ENCODE measurements at regions of chr20 and their contacts with region 1.

Region 1: GRCh38 chr20:50189681-50190582 is 698 bp upstream of the CEBPB start:
- DNase-seq: peak; percentile 70 to 95
- H3K4me3 ChIP-seq: peak overlapping the region; percentile 88; the same call in 1 of the 2 replicates
- H3K27ac ChIP-seq: peak overlapping the region; percentile 99
- H3K4me1 ChIP-seq: peaks cover 44% of the 10 kb centered on the region
- H3K27me3 ChIP-seq: no peaks in the 10 kb centered on the region
- CTCF ChIP-seq: peak; percentile 86

Region 2: DNA sequence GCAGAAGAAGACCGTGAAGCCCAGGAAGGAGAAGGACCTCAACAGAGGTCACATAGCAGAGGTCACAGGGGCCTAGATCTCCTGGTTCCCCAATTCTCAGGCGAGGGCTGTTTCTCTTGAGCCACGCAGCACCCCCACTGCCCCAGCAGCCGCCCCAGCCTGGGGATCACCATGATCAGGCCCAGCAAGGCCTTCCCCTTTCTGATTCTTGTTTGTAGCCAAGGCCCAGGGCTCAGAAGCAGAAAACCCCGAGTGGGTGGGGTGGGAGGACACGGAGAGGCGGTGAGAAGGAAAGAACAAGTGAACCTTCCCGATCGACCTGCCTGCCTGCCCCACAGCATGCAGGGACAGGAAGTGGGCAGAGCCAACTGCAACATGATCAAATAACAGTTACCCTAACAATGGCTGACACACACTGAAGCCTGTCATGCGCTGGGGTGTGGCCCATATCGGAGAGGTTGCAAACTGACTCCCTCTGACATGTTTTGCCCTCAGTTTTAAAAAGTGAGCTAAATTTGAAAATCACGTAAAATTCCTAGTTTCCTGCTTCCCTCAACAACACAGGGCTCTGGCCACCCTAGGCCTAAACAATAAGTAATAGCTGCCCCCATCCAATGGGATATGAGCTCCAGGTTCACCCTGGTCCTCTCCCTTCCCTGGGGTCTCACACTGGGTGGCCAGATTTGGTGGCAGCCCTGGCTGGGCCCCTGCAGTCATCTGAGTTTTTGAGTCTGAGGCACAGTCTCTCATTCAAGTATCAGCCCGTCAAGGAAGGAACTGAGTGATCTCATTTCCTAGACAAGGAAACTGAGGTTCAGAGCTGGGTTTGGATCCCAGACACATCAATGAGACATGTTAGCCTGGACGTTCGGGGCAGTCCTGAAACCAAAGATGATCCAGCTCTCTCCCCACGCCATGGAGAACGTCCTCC is 42.9 kb before region 1 on chr20:
- CTCF ChIA-PET with region 1: no interaction called
- POLR2A ChIA-PET with region 1: no interaction called
- intact Hi-C with region 1: no loop called
- DNase-seq: peak; percentile 75 to 76
- H3K4me3 ChIP-seq: peak overlapping the region; percentile 40; the same call in 1 of the 2 replicates
- H3K27ac ChIP-seq: peak overlapping the region; percentile 89
- H3K4me1 ChIP-seq: peaks cover 81% of the 10 kb centered on the region
- H3K27me3 ChIP-seq: no peaks in the 10 kb centered on the region
- CTCF ChIP-seq: no peak

Region 3: GRCh38 chr20:50245498-50246356 is 55.8 kb after region 1 on chr20:
- CTCF ChIA-PET with region 1: interaction called, 23 read pairs
- POLR2A ChIA-PET with region 1: interaction called, 4 read pairs
- intact Hi-C with region 1: loop called (anchors 2 kb)
- DNase-seq: peak in 1 of 2 experiments; percentile 64
- H3K4me3 ChIP-seq: peak overlapping the region; percentile 49; the same call in 1 of the 2 replicates
- H3K27ac ChIP-seq: peak overlapping the region; percentile 99
- H3K4me1 ChIP-seq: peaks cover 100% of the 10 kb centered on the region
- H3K27me3 ChIP-seq: no peaks in the 10 kb centered on the region
- CTCF ChIP-seq: no peak

Region 4: GRCh38 chr20:50286609-50287008 is 96.7 kb after region 1 on chr20:
- CTCF ChIA-PET with region 1: no interaction called
- POLR2A ChIA-PET with region 1: interaction called, 5 read pairs
- intact Hi-C with region 1: loop called (anchors 2 kb)
- DNase-seq: peak; percentile 90 to 91
- H3K4me3 ChIP-seq: peak overlapping the region; percentile 47; the same call in 1 of the 2 replicates
- H3K27ac ChIP-seq: peak overlapping the region; percentile 90
- H3K4me1 ChIP-seq: peaks cover 70% of the 10 kb centered on the region
- H3K27me3 ChIP-seq: no peaks in the 10 kb centered on the region
- CTCF ChIP-seq: 0 out of 2 replicates have a peak, but pooled peaks have one; percentile 5

Region 5: GRCh38 chr20:50372776-50373167 is 182.8 kb after region 1 on chr20:
- CTCF ChIA-PET with region 1: no interaction called
- POLR2A ChIA-PET with region 1: no interaction called
- intact Hi-C with region 1: loop called (anchors 2 kb)
- DNase-seq: peak; percentile 68 to 71
- H3K4me3 ChIP-seq: no peak overlapping the region
- H3K27ac ChIP-seq: peak overlapping the region; percentile 21
- H3K4me1 ChIP-seq: peaks cover 60% of the 10 kb centered on the region
- H3K27me3 ChIP-seq: no peaks in the 10 kb centered on the region
- CTCF ChIP-seq: no peak

Region 6: GRCh38 chr20:50438986-50439407 is 249.1 kb after region 1 on chr20:
- CTCF ChIA-PET with region 1: no interaction called
- POLR2A ChIA-PET with region 1: no interaction called
- intact Hi-C with region 1: no loop called
- DNase-seq: peak; percentile 90 to 98
- H3K4me3 ChIP-seq: no peak overlapping the region
- H3K27ac ChIP-seq: peak overlapping the region; percentile 93
- H3K4me1 ChIP-seq: peaks cover 56% of the 10 kb centered on the region
- H3K27me3 ChIP-seq: no peaks in the 10 kb centered on the region
- CTCF ChIP-seq: no peak

Region 7: GRCh38 chr20:50575847-50576720 is 386.2 kb after region 1 on chr20:
- CTCF ChIA-PET with region 1: interaction called, 8 read pairs
- POLR2A ChIA-PET with region 1: no interaction called
- intact Hi-C with region 1: loop called (anchors 1 kb)
- DNase-seq: peak in 1 of 2 experiments; percentile 60
- H3K4me3 ChIP-seq: no peak overlapping the region
- H3K27ac ChIP-seq: no peak overlapping the region
- H3K4me1 ChIP-seq: no peaks in the 10 kb centered on the region
- H3K27me3 ChIP-seq: no peaks in the 10 kb centered on the region
- CTCF ChIP-seq: peak; percentile 81

Measured in PC-9 (cell line).